Activated CD4-positive, alpha-beta T cell treated with anti-CD3 and anti-CD28 coated beads, Interleukin-2, amount 10 ng/mL, durations not matched to agents 24 days and 14 days (primary cell): ENCODE measurements at regions of chr2 and their contacts with region 1.

Region 1: DNA sequence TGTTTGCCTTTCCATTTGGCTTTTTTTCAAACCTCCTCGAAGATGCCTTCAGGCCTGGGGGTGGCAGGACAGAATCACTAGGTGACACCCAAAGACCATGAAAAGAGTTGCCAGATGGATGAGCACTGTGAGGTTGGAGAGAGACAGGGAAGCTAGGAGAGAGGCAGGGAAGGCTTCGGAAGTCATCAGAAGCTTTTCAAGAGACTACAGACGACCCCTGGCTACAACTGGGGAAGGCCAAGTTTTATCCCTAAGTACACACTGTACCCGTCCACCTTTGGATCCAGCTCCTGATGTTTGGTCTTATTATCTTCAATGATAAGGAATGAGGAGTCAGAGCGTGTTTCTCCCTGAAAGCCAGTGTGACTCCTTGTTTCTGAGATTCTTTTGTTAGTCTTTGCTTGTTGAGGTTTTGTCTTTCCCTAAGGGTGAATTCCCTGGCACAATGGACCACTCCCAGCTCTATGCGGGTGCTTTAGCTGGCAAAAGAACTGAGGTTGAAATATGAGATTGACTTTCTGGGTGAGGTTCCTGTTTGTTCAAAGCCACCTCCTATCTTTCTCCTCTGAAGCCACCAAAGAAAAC is 33.4 kb upstream of the SLC9A2 start:
- DNase-seq: no peak
- H3K4me3 Mint-ChIP-seq: no peak overlapping the region
- H3K27ac Mint-ChIP-seq: no peak overlapping the region
- H3K4me1 Mint-ChIP-seq: peaks cover 6% of the 10 kb centered on the region
- H3K27me3 Mint-ChIP-seq: peaks cover 22% of the 10 kb centered on the region

Region 2: GRCh38 chr2:102538491-102538890 is 47.4 kb before region 1 on chr2:
- intact Hi-C with region 1: loop called (anchors 2 kb)
- DNase-seq: no peak
- H3K4me3 Mint-ChIP-seq: no peak overlapping the region
- H3K27ac Mint-ChIP-seq: no peak overlapping the region
- H3K4me1 Mint-ChIP-seq: no peaks in the 10 kb centered on the region
- H3K27me3 Mint-ChIP-seq: peaks cover 19% of the 10 kb centered on the region